B cell (primary cell): ENCODE measurements at regions of chr20 and their contacts with region 1.

Region 1: DNA sequence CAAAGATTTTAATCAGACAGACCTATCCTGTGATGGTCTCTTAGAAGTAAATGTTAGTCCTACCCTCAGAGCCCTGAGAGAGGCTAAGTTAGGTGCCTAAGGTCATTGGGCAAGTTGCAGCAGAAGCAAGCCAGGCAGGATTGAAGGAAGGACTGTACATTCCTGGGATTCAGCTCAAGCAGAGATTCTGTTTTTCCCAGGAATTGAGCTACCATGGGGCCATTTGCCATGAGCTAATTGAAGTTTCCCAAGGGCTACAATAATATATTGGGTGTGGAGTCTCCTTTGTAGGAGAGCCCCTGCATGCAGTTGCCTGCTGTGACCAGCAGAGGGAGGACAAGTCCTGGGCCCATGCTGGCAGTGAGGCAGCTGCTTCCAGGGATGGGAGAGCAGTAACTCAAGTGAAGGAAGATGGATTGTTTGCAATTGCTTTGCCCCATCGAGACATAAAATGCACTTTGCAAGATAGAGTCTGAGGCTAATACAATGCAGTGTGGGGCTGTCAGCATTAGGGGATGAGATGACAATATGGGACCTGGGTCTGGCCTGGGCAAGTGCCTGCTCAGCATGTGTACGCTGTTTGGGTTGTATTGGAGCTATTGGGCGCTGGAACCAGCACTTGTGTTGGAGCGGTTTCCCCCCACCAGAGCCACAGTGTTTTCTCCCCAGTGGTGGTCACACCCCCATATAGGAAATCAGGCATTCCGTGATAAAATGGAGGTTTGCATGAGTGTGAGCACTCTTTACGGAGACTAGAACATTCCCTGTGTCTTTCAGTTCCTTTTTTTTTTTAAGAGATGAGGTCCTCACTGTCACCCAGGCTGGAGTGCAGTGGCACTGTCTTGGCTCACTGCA is 27.9 kb downstream of the DNMT3B start:
- DNase-seq: peak; percentile 75
- ATAC-seq: peak; percentile 70
- H3K4me3 ChIP-seq: no peak overlapping the region
- H3K4me3 Mint-ChIP-seq: no peak overlapping the region
- H3K27ac ChIP-seq: no peak overlapping the region
- H3K27ac Mint-ChIP-seq: no peak overlapping the region
- H3K4me1 ChIP-seq: peaks cover 27 to 33% of the 10 kb centered on the region in 2 donors
- H3K4me1 Mint-ChIP-seq: peaks cover 35% of the 10 kb centered on the region
- H3K27me3 ChIP-seq: no peaks in the 10 kb centered on the region
- H3K27me3 Mint-ChIP-seq: no peaks in the 10 kb centered on the region
- CTCF ChIP-seq: peak; percentile 99

Region 2: GRCh38 chr20:32819992-32820710 is 30.0 kb after region 1 on chr20:
- CTCF ChIA-PET with region 1: interaction called, 3 read pairs
- POLR2A ChIA-PET with region 1: interaction called, 3 read pairs
- intact Hi-C with region 1: loop called (anchors 1 kb)
- DNase-seq: peak; percentile 93
- ATAC-seq: peak; percentile 72
- H3K4me3 ChIP-seq: peak overlapping the region; percentile 66 to 92 (median 77)
- H3K4me3 Mint-ChIP-seq: peak overlapping the region; percentile 98
- H3K27ac ChIP-seq: peak overlapping the region; percentile 89 to 93
- H3K27ac Mint-ChIP-seq: peak overlapping the region; percentile 98
- H3K4me1 ChIP-seq: peaks cover 21% of the 10 kb centered on the region in 2 donors
- H3K4me1 Mint-ChIP-seq: peaks cover 39% of the 10 kb centered on the region
- H3K27me3 ChIP-seq: no peaks in the 10 kb centered on the region
- H3K27me3 Mint-ChIP-seq: no peaks in the 10 kb centered on the region
- CTCF ChIP-seq: no peak

Region 3: GRCh38 chr20:33211817-33212424 is 421.8 kb after region 1 on chr20:
- CTCF ChIA-PET with region 1: no interaction called
- POLR2A ChIA-PET with region 1: no interaction called
- intact Hi-C with region 1: loop called (anchors 10 kb)
- DNase-seq: peak; percentile 33
- ATAC-seq: no peak
- H3K4me3 ChIP-seq: no peak overlapping the region
- H3K4me3 Mint-ChIP-seq: no peak overlapping the region
- H3K27ac ChIP-seq: no peak overlapping the region
- H3K27ac Mint-ChIP-seq: no peak overlapping the region
- H3K4me1 ChIP-seq: no peaks in the 10 kb centered on the region
- H3K4me1 Mint-ChIP-seq: no peaks in the 10 kb centered on the region
- H3K27me3 ChIP-seq: peaks cover 0 to 6% (median 0%) of the 10 kb centered on the region in 4 experiments
- H3K27me3 Mint-ChIP-seq: peaks cover 58% of the 10 kb centered on the region
- CTCF ChIP-seq: peak; percentile 33

Region 4: GRCh38 chr20:33291830-33292355 is 501.8 kb after region 1 on chr20:
- CTCF ChIA-PET with region 1: interaction called, 15 read pairs
- POLR2A ChIA-PET with region 1: no interaction called
- intact Hi-C with region 1: no loop called
- DNase-seq: peak; percentile 64
- ATAC-seq: no peak
- H3K4me3 ChIP-seq: no peak overlapping the region
- H3K4me3 Mint-ChIP-seq: no peak overlapping the region
- H3K27ac ChIP-seq: no peak overlapping the region
- H3K27ac Mint-ChIP-seq: no peak overlapping the region
- H3K4me1 ChIP-seq: no peaks in the 10 kb centered on the region
- H3K4me1 Mint-ChIP-seq: no peaks in the 10 kb centered on the region
- H3K27me3 ChIP-seq: peaks cover 0 to 9% (median 1%) of the 10 kb centered on the region in 4 experiments
- H3K27me3 Mint-ChIP-seq: peaks cover 25% of the 10 kb centered on the region
- CTCF ChIP-seq: peak; percentile 98

Region 5: GRCh38 chr20:33299111-33299603 is 509.0 kb after region 1 on chr20:
- CTCF ChIA-PET with region 1: interaction called, 15 read pairs
- POLR2A ChIA-PET with region 1: no interaction called
- intact Hi-C with region 1: loop called (anchors 1 kb)
- DNase-seq: peak; percentile 78
- ATAC-seq: peak; percentile 76
- H3K4me3 ChIP-seq: no peak overlapping the region
- H3K4me3 Mint-ChIP-seq: no peak overlapping the region
- H3K27ac ChIP-seq: no peak overlapping the region
- H3K27ac Mint-ChIP-seq: no peak overlapping the region
- H3K4me1 ChIP-seq: peaks cover 0 to 6% of the 10 kb centered on the region in 2 donors
- H3K4me1 Mint-ChIP-seq: no peaks in the 10 kb centered on the region
- H3K27me3 ChIP-seq: peaks cover 0 to 17% (median 0%) of the 10 kb centered on the region in 4 experiments
- H3K27me3 Mint-ChIP-seq: peaks cover 20% of the 10 kb centered on the region
- CTCF ChIP-seq: peak; percentile 97